H1 (cell line): ENCODE measurements at regions of chr1 and their contacts with region 1.

Region 1: DNA sequence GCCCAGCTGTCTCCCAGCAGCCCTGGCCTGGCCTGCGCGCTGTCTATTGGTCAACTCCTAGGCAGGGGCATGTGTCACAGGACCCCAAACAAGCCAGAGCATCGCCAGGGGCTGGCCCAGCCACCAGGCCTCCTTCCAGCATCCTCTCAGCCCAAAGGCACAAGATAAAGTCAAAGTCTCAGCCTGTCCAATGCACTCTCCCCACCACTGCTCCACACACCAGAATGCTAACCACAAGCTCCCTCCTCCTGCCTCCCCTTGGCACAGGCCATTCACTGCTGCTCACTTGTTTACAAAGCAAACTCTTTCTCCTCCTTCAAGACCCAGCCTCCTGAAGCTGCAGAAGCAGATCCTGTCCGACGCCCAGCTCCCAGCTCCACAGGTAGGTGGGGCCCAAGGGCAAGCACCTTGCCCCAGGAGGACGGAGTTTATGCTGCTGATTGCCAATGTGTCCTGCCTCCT is 133.4 kb downstream of the DMRTB1 start:
- DNase-seq: peak in 1 of 2 experiments; percentile 27
- H3K4me3 ChIP-seq: no peak overlapping the region
- H3K27ac ChIP-seq: no peak overlapping the region
- H3K4me1 ChIP-seq: peaks cover 0 to 7% (median 5%) of the 10 kb centered on the region in 4 experiments; a peak in 5 of 7 replicates
- H3K27me3 ChIP-seq: peaks cover 0 to 7% (median 1%) of the 10 kb centered on the region in 4 experiments; a peak in 4 of 7 replicates
- CTCF ChIP-seq: peak; percentile 22 to 53 (median 48); a peak in 3 of 4 replicates
- EP300 ChIP-seq: no peak
- POLR2A ChIP-seq: no peak
- RAD21 ChIP-seq: peak; percentile 29 to 42; a peak in 2 of 4 replicates

Region 2: DNA sequence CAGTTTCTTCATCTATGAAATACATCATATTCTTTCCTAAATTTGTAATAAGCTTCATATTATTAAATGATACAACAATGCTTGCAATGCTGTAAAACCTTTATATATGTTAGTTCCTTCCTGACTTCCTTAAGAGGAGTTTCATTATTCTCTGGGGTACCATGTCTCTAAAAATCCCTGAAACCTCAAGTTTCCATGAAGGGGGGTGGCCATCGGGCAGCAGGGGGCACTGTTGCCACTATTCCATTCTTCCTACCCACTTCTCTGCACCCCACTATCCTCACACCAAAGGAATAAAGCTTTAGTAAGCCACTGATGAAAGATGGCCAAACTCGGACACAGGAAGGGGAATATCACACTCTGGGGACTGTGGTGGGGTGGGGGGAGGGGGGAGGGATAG is 142.3 kb before region 1 on chr1:
- CTCF ChIA-PET with region 1: interaction called, 14 read pairs
- POLR2A ChIA-PET with region 1: no interaction called
- DNase-seq: peak in 1 of 2 experiments; percentile 75
- H3K4me3 ChIP-seq: no peak overlapping the region; a peak in 1 of 8 replicates
- H3K27ac ChIP-seq: no peak overlapping the region
- H3K4me1 ChIP-seq: peaks cover 3 to 24% (median 19%) of the 10 kb centered on the region in 4 experiments
- H3K27me3 ChIP-seq: no peaks in the 10 kb centered on the region; a peak in 1 of 7 replicates
- CTCF ChIP-seq: peak; percentile 59 to 67 (median 60)
- EP300 ChIP-seq: no peak
- POLR2A ChIP-seq: no peak
- RAD21 ChIP-seq: peak; percentile 32 to 51; a peak in 3 of 4 replicates

Region 3: DNA sequence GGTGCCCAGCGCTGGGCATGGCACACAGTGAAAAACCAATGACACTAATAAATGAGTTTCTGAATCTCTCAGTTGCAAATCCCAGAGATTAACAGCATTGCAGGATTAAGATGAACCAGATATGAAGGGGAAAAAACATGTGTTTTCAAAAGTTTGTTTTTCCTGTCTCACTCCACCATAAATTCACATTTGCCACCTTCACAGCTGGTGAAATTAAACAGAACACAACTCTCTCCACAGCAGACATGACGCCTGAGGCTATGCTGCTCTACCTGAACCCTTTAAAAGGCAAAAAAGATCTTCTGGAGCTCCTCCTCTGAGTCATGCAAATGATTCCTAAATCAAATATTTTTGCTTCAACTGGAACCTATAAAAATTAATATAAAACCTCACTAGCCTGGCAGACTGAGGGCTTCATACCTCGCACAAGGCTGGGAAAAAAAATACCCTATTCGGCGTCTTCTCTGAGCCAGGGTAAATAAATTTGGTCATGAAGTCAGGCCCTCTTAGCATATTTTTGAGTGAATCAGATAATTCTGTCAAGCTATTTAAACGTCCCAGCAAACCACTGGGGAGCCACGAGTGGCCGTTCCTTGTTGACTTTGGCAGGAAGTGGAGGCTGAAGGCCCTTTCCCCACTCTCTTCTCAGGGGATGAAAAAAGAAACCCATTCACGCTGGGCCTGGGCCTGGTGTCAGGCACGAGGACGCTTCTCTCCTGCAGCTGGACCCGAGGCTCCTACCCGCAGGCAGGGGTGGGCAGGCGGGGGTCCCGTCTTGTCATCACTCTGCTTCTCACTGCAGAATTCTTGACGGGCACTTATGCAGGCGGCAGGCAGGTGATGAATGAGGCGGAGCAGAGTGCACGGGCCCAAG is 80.4 kb before region 1 on chr1:
- CTCF ChIA-PET with region 1: interaction called, 10 read pairs
- POLR2A ChIA-PET with region 1: no interaction called
- DNase-seq: no peak
- H3K4me3 ChIP-seq: no peak overlapping the region
- H3K27ac ChIP-seq: no peak overlapping the region
- H3K4me1 ChIP-seq: peaks cover 0 to 17% (median 3%) of the 10 kb centered on the region in 4 experiments; a peak in 1 of 7 replicates
- H3K27me3 ChIP-seq: no peaks in the 10 kb centered on the region
- CTCF ChIP-seq: no peak
- EP300 ChIP-seq: no peak
- POLR2A ChIP-seq: no peak
- RAD21 ChIP-seq: no peak

Region 4: DNA sequence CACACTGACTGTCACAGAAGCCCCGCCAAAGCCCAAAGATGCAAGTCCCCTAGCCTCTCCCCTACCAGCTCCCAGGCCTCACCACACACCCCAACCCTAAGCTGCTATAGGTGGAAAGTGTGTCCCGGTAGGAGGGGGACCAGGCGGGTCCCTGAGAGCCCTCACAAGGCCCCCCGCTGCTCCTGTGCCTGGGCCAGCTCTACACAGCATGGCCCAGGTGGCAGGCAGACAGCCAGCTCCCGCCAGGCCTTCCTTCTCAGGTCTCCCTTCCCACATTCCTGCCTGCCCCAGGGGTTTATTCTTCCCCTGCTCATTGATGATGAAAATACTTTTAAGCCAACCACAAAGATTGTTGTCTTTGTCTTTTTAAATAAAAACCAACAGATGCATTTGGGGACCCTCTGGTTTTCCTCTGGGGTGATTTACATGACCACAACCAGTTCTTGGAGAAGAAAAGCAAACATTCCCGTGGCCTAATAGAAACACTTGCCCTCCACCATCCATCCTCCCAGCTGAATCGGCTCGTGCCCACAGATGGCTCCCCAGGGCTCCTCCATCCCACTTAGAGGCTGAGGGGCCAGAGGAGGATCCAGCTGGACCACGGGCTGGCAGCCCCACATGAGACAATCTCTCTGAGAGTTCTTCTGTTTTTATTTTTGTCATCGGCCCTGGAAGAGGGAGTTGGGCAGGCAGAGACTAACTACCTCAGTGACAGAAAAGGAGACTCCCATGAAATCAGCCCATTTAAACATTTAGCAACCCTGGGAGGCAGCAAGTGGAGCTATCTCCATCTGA is 40.2 kb before region 1 on chr1:
- CTCF ChIA-PET with region 1: interaction called, 13 read pairs
- POLR2A ChIA-PET with region 1: no interaction called
- DNase-seq: peak; percentile 27 to 64
- H3K4me3 ChIP-seq: no peak overlapping the region
- H3K27ac ChIP-seq: no peak overlapping the region
- H3K4me1 ChIP-seq: peaks cover 6 to 26% (median 16%) of the 10 kb centered on the region in 4 experiments
- H3K27me3 ChIP-seq: peaks cover 0 to 6% (median 4%) of the 10 kb centered on the region in 4 experiments; a peak in 3 of 7 replicates
- CTCF ChIP-seq: no peak
- EP300 ChIP-seq: no peak
- POLR2A ChIP-seq: no peak
- RAD21 ChIP-seq: no peak

Region 5: GRCh38 chr1:53572065-53572814 is 20.3 kb before region 1 on chr1:
- CTCF ChIA-PET with region 1: interaction called, 175 read pairs
- POLR2A ChIA-PET with region 1: interaction called, 3 read pairs
- DNase-seq: no peak
- H3K4me3 ChIP-seq: no peak overlapping the region
- H3K27ac ChIP-seq: no peak overlapping the region
- H3K4me1 ChIP-seq: peaks cover 0 to 12% (median 6%) of the 10 kb centered on the region in 4 experiments; a peak in 5 of 7 replicates
- H3K27me3 ChIP-seq: no peaks in the 10 kb centered on the region
- CTCF ChIP-seq: no peak
- EP300 ChIP-seq: no peak
- POLR2A ChIP-seq: no peak
- RAD21 ChIP-seq: no peak

Region 6: DNA sequence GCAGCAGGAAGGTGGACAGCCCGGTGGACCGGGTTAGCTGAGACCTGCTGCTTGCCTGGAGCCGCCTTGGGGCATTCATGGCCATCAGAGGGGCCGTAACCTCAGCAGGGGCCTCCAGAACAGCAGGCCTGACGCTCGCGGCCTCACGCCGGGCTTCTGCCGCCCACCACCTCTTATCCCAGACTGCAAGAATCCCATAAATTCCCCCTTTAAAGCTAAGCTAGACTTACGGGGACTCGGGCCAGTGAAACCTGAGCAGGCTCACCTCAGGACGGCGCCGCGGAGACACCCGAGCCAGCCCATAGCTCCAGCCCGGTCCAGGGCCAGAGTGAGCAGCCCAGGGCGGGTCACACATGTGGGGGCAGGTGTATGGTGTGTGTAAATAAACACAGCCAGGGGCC is 14.1 kb after region 1 on chr1:
- CTCF ChIA-PET with region 1: interaction called, 26 read pairs
- POLR2A ChIA-PET with region 1: interaction called, 3 read pairs
- DNase-seq: peak in 1 of 2 experiments; percentile 65
- H3K4me3 ChIP-seq: no peak overlapping the region
- H3K27ac ChIP-seq: no peak overlapping the region
- H3K4me1 ChIP-seq: peaks cover 0 to 6% (median 4%) of the 10 kb centered on the region in 4 experiments; a peak in 5 of 7 replicates
- H3K27me3 ChIP-seq: peaks cover 0 to 7% (median 0%) of the 10 kb centered on the region in 4 experiments; a peak in 3 of 7 replicates
- CTCF ChIP-seq: no peak
- EP300 ChIP-seq: no peak
- POLR2A ChIP-seq: no peak
- RAD21 ChIP-seq: no peak; a peak in 1 of 4 replicates